Posterior cingulate gyrus (tissue), 11 donors: ENCODE measurements at regions of chr2 and their contacts with region 1.

Region 1: GRCh38 chr2:102240640-102241370 is 54.0 kb downstream of the IL1RL2 start:
- DNase-seq: peak; percentile 70 to 98 (median 89)

Region 2: DNA sequence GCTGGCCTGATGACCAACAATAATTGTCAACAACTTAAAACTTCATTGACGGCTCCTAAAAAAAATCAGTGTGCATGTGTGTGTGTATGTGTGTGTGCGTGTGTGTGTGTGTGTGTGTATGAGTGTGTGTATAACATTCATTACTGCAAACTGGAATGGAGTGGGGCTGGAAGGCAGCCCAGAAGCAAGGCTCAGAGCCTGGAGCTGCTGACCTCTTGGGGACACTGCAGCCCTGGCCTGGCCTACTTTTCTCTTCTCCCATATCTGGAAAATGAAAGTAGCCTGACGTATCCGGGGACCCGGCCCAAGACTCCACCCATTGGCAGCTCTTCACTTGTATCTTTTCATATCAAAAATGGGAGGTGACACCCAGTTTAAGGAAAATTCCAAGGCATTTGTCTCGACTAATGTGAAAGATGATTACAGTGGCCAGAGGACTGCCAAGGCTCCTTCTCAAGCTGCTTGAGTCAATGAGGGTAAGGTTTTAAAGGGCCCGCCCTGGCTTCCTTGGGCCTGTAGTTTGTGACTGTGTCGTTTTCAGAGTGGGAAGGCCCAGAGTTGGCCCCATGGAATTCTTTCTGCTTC is 170.7 kb before region 1 on chr2:
- intact Hi-C with region 1: no loop called
- DNase-seq: no peak

Region 3: DNA sequence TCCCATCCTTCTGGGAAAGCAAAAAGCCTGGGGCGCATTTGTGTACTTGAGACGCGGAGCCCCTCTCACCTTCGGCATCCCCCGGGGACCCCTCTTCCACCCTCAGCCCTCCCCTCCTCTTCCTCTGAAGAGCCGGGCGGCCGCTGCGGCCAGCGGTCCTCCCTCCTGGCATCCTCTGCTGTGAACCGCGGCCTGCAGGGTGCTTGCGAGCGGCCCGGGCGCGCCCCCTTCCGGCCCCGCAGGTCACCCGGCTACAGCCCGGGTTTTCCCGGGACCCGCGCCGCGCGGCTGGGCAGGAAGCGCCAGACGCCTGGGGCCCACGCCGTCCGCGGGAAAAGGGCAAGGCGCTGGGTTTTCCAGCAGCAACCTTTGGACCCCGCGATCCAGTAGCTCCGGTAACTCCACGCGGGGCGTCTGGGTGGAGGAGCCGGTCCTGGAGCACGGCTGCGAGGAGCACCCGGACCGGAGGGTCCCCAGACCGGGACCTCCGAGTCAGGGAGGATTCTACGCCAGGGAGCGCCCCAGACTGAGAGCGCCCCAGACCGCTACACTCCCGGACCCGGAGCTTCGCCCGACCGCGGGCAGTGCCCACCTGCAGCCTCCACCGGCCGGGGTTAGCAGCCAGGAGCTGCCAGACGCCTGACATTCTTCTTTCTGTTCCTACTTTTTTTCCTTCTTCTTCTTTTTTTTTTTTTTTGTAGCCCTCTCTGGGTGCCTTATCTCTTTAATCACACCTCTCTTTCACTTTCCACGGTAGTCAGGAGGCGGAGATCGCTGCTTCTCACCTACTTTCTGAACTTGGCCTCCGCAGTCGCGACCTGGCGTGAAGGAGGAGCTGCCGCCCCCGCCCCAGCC is 114.9 kb after region 1 on chr2 and contains the start of gene IL18R1:
- intact Hi-C with region 1: loop called (anchors 5 kb)
- DNase-seq: peak; percentile 25 to 92 (median 56)

Region 4: GRCh38 chr2:102442967-102443828 is 202.4 kb after region 1 on chr2:
- intact Hi-C with region 1: loop called (anchors 5 kb)
- DNase-seq: peak in 2 of 10 donors; percentile 15 to 20